ENCODE measurements at regions of chr2 and their contacts with region 1.

Region 1: DNA sequence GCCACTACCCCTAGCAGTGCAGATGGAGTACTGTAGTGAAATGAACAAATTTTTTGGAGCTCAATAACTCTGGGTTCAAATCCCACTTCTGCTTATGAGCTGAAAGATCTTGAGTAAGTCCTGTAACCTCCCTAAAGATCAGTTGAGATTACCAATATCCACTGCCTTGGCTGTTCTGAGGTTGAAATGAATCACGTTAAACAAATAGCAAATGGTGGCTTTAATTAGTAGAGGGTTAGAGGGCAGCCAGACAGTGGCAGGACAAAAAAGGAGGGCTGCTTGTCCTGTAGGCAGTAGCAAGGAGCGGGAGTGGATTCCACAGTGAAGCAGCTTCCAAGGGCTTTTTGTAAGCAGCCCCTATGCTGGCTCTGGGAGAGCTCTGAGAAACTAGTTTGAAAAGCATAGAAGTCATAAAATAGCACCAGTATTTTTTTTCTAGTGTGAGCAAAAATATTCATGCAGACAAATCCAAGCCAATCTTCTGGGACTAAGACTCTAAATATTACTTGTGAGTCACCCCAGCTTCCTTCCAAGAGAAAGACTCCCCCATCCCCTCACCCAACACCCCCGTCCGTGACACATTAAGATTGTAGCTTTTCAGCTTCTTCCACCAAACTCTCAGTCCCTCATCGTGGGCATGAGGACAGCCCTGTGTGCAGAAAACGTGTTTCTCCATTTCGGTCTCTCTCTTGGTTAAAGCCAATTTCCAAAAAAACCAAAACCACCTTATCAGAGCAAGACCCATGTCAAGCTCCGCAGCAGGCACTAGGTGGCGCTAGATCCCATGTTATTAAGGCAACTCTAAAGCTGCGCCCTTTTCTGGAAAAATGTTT is 123.5 kb upstream of the LGALSL start:
- DNase-seq: peak; percentile 86
- ATAC-seq: no peak
- H3K4me3 ChIP-seq: no peak overlapping the region
- H3K4me3 Mint-ChIP-seq: peak overlapping the region; percentile 16
- H3K27ac ChIP-seq: no peak overlapping the region
- H3K27ac Mint-ChIP-seq: peak overlapping the region; percentile 33
- H3K4me1 ChIP-seq: peaks cover 24 to 36% of the 10 kb centered on the region in 2 donors
- H3K4me1 Mint-ChIP-seq: peaks cover 35% of the 10 kb centered on the region
- H3K27me3 ChIP-seq: no peaks in the 10 kb centered on the region
- H3K27me3 Mint-ChIP-seq: no peaks in the 10 kb centered on the region
- CTCF ChIP-seq: peak; percentile 94

Region 2: GRCh38 chr2:64086347-64087082 is 244.0 kb before region 1 on chr2:
- CTCF ChIA-PET with region 1: interaction called, 15 read pairs
- POLR2A ChIA-PET with region 1: interaction called, 5 read pairs
- intact Hi-C with region 1: loop called (anchors 5 kb)
- DNase-seq: no peak
- ATAC-seq: peak; percentile 50
- H3K4me3 ChIP-seq: no peak overlapping the region
- H3K4me3 Mint-ChIP-seq: peak overlapping the region; percentile 75
- H3K27ac ChIP-seq: no peak overlapping the region
- H3K27ac Mint-ChIP-seq: peak overlapping the region; percentile 79
- H3K4me1 ChIP-seq: peaks cover 35 to 37% of the 10 kb centered on the region in 2 donors
- H3K4me1 Mint-ChIP-seq: peaks cover 52% of the 10 kb centered on the region
- H3K27me3 ChIP-seq: no peaks in the 10 kb centered on the region
- H3K27me3 Mint-ChIP-seq: no peaks in the 10 kb centered on the region
- CTCF ChIP-seq: no peak

Region 3: DNA sequence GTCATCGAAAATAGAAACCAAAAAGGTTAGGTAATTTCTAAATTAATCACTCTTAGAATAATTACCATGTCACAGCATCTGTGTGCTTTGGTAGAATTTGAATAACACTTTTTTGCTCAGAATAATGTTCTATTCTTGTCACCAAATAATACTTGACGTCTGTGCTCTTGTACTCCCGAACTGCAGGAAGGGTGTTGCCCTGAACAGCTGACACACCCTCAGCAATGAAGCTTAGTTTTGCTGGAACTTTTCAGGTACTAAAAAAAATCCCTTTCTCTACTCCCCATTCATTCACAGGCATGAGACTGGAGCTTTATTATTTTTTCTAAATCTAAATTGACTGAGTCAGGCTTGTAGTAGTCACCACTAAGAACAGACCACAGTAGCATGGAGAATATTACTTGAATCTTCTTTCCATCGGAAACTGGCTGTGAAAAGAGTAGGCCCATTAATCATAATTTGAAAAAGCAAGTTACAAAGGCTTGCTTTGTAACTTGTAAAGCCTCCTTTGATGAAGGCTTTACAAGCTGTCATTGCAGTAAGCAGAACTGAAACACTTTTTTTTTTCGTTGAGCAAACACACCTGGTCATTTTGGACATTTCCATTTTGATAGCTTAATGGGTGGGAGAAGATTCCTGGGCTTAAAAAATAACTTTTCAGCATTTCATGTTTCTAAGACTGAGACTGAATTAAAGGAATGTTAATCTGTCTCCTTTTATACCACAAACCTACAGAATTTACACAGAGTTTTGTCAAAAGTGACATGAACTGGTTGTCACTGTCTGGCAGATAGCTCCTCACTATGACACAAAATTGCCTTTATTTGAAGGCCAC is 116.0 kb before region 1 on chr2:
- CTCF ChIA-PET with region 1: interaction called, 39 read pairs
- POLR2A ChIA-PET with region 1: interaction called, 14 read pairs
- intact Hi-C with region 1: loop called (anchors 1 kb)
- DNase-seq: peak; percentile 83
- ATAC-seq: peak; percentile 75
- H3K4me3 ChIP-seq: peak overlapping the region in 4 of 5 experiments; percentile 7 to 48 (median 26)
- H3K4me3 Mint-ChIP-seq: peak overlapping the region; percentile 80
- H3K27ac ChIP-seq: peak overlapping the region; percentile 89 to 98
- H3K27ac Mint-ChIP-seq: peak overlapping the region; percentile 99
- H3K4me1 ChIP-seq: peaks cover 59 to 69% of the 10 kb centered on the region in 2 donors
- H3K4me1 Mint-ChIP-seq: peaks cover 62% of the 10 kb centered on the region
- H3K27me3 ChIP-seq: no peaks in the 10 kb centered on the region
- H3K27me3 Mint-ChIP-seq: no peaks in the 10 kb centered on the region
- CTCF ChIP-seq: no peak

Region 4: DNA sequence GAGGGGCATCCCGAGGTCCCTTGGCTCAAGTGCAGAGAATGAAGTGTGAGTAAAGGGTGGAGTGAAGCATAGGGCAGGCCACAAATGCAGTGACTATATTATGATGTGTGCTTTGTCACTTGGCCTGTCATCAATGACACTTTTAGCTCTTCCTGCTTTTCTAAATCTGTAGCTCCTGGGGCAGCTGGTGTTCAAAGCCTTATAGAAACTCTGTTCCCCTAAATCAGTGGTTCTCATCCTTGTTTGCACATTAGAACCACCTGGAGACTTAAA is 12.1 kb before region 1 on chr2:
- CTCF ChIA-PET with region 1: interaction called, 30 read pairs
- POLR2A ChIA-PET with region 1: no interaction called
- intact Hi-C with region 1: no loop called
- DNase-seq: no peak
- ATAC-seq: no peak
- H3K4me3 ChIP-seq: no peak overlapping the region
- H3K4me3 Mint-ChIP-seq: no peak overlapping the region
- H3K27ac ChIP-seq: no peak overlapping the region
- H3K27ac Mint-ChIP-seq: no peak overlapping the region
- H3K4me1 ChIP-seq: no peaks in the 10 kb centered on the region
- H3K4me1 Mint-ChIP-seq: peaks cover 5% of the 10 kb centered on the region
- H3K27me3 ChIP-seq: no peaks in the 10 kb centered on the region
- H3K27me3 Mint-ChIP-seq: peaks cover 7% of the 10 kb centered on the region
- CTCF ChIP-seq: no peak

Region 5: GRCh38 chr2:64493788-64494187 is 163.3 kb after region 1 on chr2:
- CTCF ChIA-PET with region 1: interaction called, 398 read pairs
- POLR2A ChIA-PET with region 1: no interaction called
- intact Hi-C with region 1: loop called (anchors 1 kb)
- DNase-seq: no peak
- ATAC-seq: no peak
- H3K4me3 ChIP-seq: no peak overlapping the region
- H3K4me3 Mint-ChIP-seq: no peak overlapping the region
- H3K27ac ChIP-seq: no peak overlapping the region
- H3K27ac Mint-ChIP-seq: no peak overlapping the region
- H3K4me1 ChIP-seq: no peaks in the 10 kb centered on the region
- H3K4me1 Mint-ChIP-seq: no peaks in the 10 kb centered on the region
- H3K27me3 ChIP-seq: peaks cover 0 to 7% (median 0%) of the 10 kb centered on the region in 4 experiments
- H3K27me3 Mint-ChIP-seq: peaks cover 36% of the 10 kb centered on the region
- CTCF ChIP-seq: no peak

Region 6: DNA sequence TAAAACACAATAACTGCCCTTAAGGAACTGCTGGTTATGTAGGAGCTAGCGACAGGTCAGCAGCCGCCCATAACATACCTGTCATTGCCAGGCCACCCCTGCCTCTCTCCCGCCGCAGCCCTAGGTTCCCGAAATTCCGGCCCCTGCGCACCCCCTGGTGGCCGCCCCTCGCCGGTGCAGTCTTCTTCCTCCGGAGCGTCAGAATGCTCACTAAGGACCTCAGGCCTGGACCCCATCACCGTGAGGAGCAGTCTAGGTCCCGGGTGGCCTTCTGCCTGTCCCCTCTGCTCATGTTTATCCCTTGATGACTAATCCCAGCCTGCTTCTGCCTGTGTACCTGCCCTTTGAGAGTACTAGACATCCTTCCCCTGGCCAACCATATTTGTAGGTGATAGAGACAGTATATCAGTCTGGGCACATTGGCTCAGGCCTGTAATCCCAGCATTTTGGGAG is 543.0 kb after region 1 on chr2:
- CTCF ChIA-PET with region 1: interaction called, 15 read pairs
- POLR2A ChIA-PET with region 1: no interaction called
- intact Hi-C with region 1: loop called (anchors 1 kb)
- DNase-seq: peak; percentile 87
- ATAC-seq: peak; percentile 99
- H3K4me3 ChIP-seq: peak overlapping the region in 3 of 5 experiments; percentile 11 to 35 (median 29)
- H3K4me3 Mint-ChIP-seq: peak overlapping the region; percentile 67
- H3K27ac ChIP-seq: no peak overlapping the region
- H3K27ac Mint-ChIP-seq: no peak overlapping the region
- H3K4me1 ChIP-seq: peaks cover 7 to 9% of the 10 kb centered on the region in 2 donors
- H3K4me1 Mint-ChIP-seq: peaks cover 7% of the 10 kb centered on the region
- H3K27me3 ChIP-seq: no peaks in the 10 kb centered on the region
- H3K27me3 Mint-ChIP-seq: no peaks in the 10 kb centered on the region
- CTCF ChIP-seq: peak; percentile 93

Measured in B cell (primary cell).